Left ventricle myocardium superior (tissue), 1 donor: ENCODE measurements at regions of chrX and their contacts with region 1.

Region 1: DNA sequence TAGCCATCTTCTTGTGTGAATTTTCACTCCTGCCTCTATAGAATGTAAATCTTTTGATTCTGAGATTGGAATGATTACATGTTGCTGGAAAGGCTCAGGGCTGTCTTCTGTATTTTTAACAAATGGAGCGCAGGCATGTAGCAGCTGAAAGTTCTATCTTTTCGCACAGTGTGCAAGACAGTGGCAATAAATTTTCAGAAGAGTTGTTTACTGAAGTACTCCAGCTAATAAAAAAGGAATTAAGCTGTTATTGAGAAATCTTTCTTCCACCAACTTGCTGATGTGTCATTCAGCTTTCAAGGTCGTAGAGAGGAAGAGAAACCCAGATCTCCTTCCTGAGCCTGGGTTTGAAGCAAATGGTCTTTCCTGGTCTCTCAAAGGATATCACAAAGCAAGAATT is 122.0 kb upstream of the PUDP start:
- DNase-seq: no peak
- ATAC-seq: no peak

Region 2: GRCh38 chrX:7219184-7219601 is 50.8 kb before region 1 on chrX:
- intact Hi-C with region 1: loop called (anchors 10 kb)
- DNase-seq: peak; percentile 21
- ATAC-seq: no peak

Region 3: DNA sequence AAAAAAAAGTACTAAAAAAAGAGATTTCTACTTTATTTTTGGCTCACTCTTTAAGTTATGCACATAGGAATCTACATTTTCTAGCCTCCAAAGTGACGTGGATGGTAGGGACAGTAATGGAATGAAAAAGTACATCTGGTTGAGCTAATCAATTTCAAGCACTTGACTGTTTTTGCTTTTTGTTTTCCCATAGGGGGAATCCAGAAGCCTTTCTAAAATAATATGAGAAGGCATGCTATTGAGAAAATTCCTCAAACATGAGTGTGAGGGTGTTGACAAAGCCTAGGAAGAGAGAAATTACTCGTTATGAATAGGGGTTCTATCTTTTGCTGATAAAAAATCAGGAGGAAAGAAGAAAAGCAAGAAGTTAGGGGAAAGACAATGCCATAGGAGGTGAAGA is 120.5 kb after region 1 on chrX:
- intact Hi-C with region 1: no loop called
- DNase-seq: no peak
- ATAC-seq: no peak